Transverse colon (tissue), 4 donors: ENCODE measurements at regions of chr1 and their contacts with region 1.

Region 1: DNA sequence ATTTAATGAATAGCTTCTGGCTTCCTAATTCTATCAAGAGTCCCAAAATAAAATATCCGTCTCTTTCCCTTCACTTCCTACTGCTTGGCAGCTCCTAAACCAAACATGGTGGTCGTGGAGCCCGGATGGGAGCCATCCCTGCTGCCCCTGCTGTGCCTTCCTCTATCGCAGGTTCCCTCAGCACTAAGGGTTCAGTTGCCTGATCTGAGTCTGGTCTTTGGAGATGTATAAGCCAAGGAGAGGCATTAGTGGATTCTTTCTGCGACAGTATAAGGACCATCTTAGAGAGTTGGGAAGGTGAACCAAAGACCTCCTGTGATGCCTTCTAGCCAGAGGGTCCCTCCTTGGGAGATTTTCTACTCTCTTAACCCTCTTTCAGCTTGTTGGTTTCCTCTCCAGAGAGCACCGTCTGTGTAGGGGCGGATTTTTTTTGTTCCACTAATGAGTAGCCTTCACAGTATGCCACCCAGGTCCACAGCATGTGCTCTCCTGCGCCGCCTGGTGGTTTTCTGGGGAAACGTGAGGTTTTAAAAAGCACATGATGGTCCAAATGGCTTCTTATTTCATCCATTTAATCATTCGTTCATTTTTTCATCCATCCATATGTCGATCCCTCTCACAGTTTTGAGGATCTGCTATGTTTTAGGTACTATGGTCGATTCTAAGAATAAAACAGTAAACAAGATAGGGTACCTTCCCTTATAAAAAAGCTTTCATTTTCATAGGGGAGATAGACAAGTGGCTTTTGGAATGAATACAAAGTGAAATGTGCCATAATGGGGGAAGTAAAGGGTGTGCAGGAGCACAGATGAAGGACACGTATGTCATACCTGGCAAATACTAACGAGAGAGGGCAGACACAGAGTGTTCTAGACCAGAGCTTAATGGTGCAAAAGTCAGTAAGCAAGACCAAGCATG is 71.0 kb downstream of the NFASC start:
- DNase-seq: peak; percentile 73
- H3K4me3 ChIP-seq: no peak overlapping the region
- H3K27ac ChIP-seq: no peak overlapping the region
- H3K4me1 ChIP-seq: peaks cover 0 to 4% (median 0%) of the 10 kb centered on the region in 4 donors
- H3K27me3 ChIP-seq: no peaks in the 10 kb centered on the region
- CTCF ChIP-seq: peak; percentile 89 to 96 (median 91)
- EP300 ChIP-seq: no peak
- POLR2A ChIP-seq: no peak

Region 2: GRCh38 chr1:204806943-204807687 is 134.6 kb before region 1 on chr1:
- in situ Hi-C with region 1: loop called (anchors 5 to 25 kb)
- intact Hi-C with region 1: loop called (anchors 2 kb)
- DNase-seq: peak; percentile 86
- H3K4me3 ChIP-seq: peak overlapping the region; percentile 14 to 52 (median 28)
- H3K27ac ChIP-seq: peak overlapping the region in 1 of 4 donors; percentile 52
- H3K4me1 ChIP-seq: peaks cover 0 to 26% (median 7%) of the 10 kb centered on the region in 4 donors
- H3K27me3 ChIP-seq: no peaks in the 10 kb centered on the region
- CTCF ChIP-seq: peak; percentile 96 to 99 (median 98)
- EP300 ChIP-seq: no peak
- POLR2A ChIP-seq: no peak

Region 3: GRCh38 chr1:204812832-204813231 is 128.8 kb before region 1 on chr1:
- in situ Hi-C with region 1: loop called (anchors 5 to 25 kb)
- intact Hi-C with region 1: loop called (anchors 2 kb)
- DNase-seq: no peak
- H3K4me3 ChIP-seq: no peak overlapping the region
- H3K27ac ChIP-seq: no peak overlapping the region
- H3K4me1 ChIP-seq: peaks cover 11 to 37% (median 20%) of the 10 kb centered on the region in 4 donors
- H3K27me3 ChIP-seq: no peaks in the 10 kb centered on the region
- CTCF ChIP-seq: no peak
- EP300 ChIP-seq: no peak
- POLR2A ChIP-seq: no peak

Region 4: GRCh38 chr1:204819495-204819894 is 122.2 kb before region 1 on chr1:
- in situ Hi-C with region 1: loop called in 3 of 4 experiments (anchors 10 to 25 kb)
- intact Hi-C with region 1: no loop called
- DNase-seq: no peak
- H3K4me3 ChIP-seq: no peak overlapping the region
- H3K27ac ChIP-seq: peak overlapping the region; percentile 25 to 71 (median 69)
- H3K4me1 ChIP-seq: peaks cover 10 to 18% (median 16%) of the 10 kb centered on the region in 4 donors
- H3K27me3 ChIP-seq: no peaks in the 10 kb centered on the region
- CTCF ChIP-seq: no peak
- EP300 ChIP-seq: no peak
- POLR2A ChIP-seq: no peak